ENCODE measurements at regions of chr14 and their contacts with region 1.

Region 1: DNA sequence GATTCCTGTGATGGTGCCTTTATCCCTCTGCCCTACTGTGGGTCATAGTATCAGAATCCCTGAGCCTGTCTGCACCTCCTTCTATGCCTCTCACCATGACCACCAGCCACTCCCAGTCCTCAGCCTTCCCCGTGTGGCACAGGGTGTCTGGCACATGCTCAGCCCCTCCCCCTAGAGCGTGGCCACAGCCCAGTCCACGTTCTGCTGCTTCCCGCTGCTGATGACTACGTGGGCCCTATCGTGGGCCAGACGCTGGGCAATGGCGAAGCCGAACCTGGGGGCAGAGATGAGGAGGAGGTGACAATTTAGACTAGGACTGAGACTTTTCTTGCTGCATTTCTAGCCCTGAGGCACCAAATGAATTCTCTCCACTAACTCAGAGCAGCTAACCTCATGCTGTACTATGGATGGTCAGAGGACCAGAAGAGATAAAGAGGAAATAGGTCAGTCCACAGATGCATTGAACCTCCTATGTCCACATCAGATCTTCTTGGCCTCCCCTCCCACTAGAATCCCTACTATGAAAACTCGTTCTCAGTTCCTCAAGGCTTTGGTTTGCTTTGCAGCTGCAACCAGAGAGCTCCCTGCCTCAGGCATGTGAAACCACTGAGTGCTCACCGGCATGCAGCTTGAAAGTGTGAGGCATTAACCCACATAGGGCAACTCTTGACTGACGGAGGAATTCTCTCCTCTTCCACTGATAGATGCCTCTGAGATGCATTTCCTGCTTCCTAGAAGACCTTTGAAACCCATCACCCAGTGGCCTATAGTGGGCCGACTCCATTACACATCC is 126.3 kb upstream of the DHRS4 start:
- DNase-seq: no peak
- H3K4me3 ChIP-seq: no peak overlapping the region
- H3K27ac ChIP-seq: no peak overlapping the region
- H3K4me1 ChIP-seq: no peaks in the 10 kb centered on the region
- H3K27me3 ChIP-seq: no peaks in the 10 kb centered on the region
- CTCF ChIP-seq: no peak
- POLR2A ChIP-seq: no peak

Region 2: DNA sequence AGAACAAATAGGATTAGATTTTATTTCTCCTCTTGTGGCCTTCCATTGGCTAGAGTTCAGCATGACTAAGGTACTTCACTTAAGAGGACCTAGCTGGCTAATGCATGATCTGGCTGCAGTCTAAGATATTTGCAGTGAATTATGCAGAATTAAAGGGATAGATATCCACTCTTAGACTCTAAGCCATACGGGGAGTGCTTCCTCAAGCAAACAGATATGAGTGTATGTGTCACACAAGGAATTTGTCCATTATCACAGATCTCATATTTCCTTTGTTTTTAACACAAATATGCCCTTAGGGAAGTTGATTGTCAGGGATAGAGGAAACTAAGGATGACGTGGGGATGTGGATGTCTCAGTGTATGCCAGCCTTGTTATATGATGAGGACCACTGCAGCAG is 38.2 kb after region 1 on chr14:
- intact Hi-C with region 1: loop called (anchors 1 kb)
- DNase-seq: no peak
- H3K4me3 ChIP-seq: no peak overlapping the region
- H3K27ac ChIP-seq: no peak overlapping the region
- H3K4me1 ChIP-seq: no peaks in the 10 kb centered on the region
- H3K27me3 ChIP-seq: no peaks in the 10 kb centered on the region
- CTCF ChIP-seq: no peak
- POLR2A ChIP-seq: no peak

Measured in vagina (tissue), 2 donors.